ENCODE measurements at regions of chrX and their contacts with region 1.

Region 1: DNA sequence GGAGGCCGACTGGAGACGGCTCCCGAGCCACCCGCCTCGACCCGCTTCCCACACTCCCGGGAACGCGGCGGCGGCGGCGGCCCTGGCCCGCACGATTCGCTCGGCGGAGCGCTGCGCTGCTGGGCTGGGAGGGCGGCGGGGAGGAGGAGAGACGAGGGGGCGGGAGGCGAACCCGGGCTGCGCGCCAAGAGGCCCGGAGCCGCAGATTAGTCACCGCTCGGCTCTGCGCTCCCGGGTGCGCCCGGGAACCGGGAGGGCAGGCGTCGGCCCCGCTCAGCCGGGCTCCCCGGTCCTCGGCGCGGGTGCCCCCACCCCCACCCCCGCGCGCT is 11.2 kb upstream of the BCOR start:
- DNase-seq: peak; percentile 81 to 88 (median 85)
- ATAC-seq: peak; percentile 49 to 73 (median 68)
- H3K4me3 ChIP-seq: peak overlapping the region; percentile 41 to 88 (median 60)
- H3K27ac ChIP-seq: peak overlapping the region; percentile 81 to 97 (median 94)
- H3K4me1 ChIP-seq: peaks cover 0 to 63% (median 21%) of the 10 kb centered on the region in 12 donors
- H3K27me3 ChIP-seq: peaks cover 0 to 84% (median 0%) of the 10 kb centered on the region in 9 donors
- CTCF ChIP-seq: no peak
- POLR2A ChIP-seq: peak in 1 of 2 donors; percentile 34

Region 2: GRCh38 chrX:38803586-38804431 is 1305.1 kb before region 1 on chrX:
- intact Hi-C with region 1: loop called in 1 of 10 experiments (anchors 5 kb)
- DNase-seq: peak; percentile 86 to 91 (median 90)
- ATAC-seq: peak; percentile 84 to 92 (median 86)
- H3K4me3 ChIP-seq: peak overlapping the region; percentile 44 to 90 (median 70)
- H3K27ac ChIP-seq: peak overlapping the region; percentile 86 to 98 (median 93)
- H3K4me1 ChIP-seq: peaks cover 0 to 37% (median 12%) of the 10 kb centered on the region in 12 donors
- H3K27me3 ChIP-seq: no peaks in the 10 kb centered on the region
- CTCF ChIP-seq: no peak
- POLR2A ChIP-seq: peak in 1 of 2 donors; percentile 90

Region 3: GRCh38 chrX:39907964-39908616 is 200.8 kb before region 1 on chrX:
- intact Hi-C with region 1: loop called in 1 of 10 experiments (anchors 10 kb)
- DNase-seq: peak; percentile 44 to 76 (median 72)
- ATAC-seq: peak; percentile 80 to 93 (median 88)
- H3K4me3 ChIP-seq: no peak overlapping the region
- H3K27ac ChIP-seq: peak overlapping the region in 9 of 12 donors; percentile 27 to 66 (median 38)
- H3K4me1 ChIP-seq: peaks cover 0 to 29% (median 5%) of the 10 kb centered on the region in 12 donors
- H3K27me3 ChIP-seq: peaks cover 0 to 23% (median 0%) of the 10 kb centered on the region in 9 donors
- CTCF ChIP-seq: no peak
- POLR2A ChIP-seq: no peak

Region 4: GRCh38 chrX:40146262-40147125 is 37.6 kb after region 1 on chrX:
- intact Hi-C with region 1: loop called in 7 of 10 experiments (anchors 5 kb)
- DNase-seq: peak in 3 of 5 donors; percentile 26 to 56 (median 51)
- ATAC-seq: peak in 3 of 4 donors; percentile 12 to 49 (median 33)
- H3K4me3 ChIP-seq: peak overlapping the region; percentile 34 to 71 (median 56)
- H3K27ac ChIP-seq: peak overlapping the region in 8 of 12 donors; percentile 24 to 72 (median 58)
- H3K4me1 ChIP-seq: peaks cover 0 to 68% (median 23%) of the 10 kb centered on the region in 12 donors
- H3K27me3 ChIP-seq: peaks cover 0 to 82% (median 0%) of the 10 kb centered on the region in 9 donors
- CTCF ChIP-seq: no peak
- POLR2A ChIP-seq: no peak

Region 5: GRCh38 chrX:40153335-40154249 is 44.7 kb after region 1 on chrX:
- intact Hi-C with region 1: loop called (anchors 1 to 5 kb)
- DNase-seq: peak in 4 of 5 donors; percentile 37 to 70 (median 62)
- ATAC-seq: peak in 3 of 4 donors; percentile 3 to 22 (median 21)
- H3K4me3 ChIP-seq: peak overlapping the region; percentile 21 to 63 (median 50)
- H3K27ac ChIP-seq: peak overlapping the region; percentile 65 to 89 (median 81)
- H3K4me1 ChIP-seq: peaks cover 0 to 78% (median 29%) of the 10 kb centered on the region in 12 donors
- H3K27me3 ChIP-seq: peaks cover 0 to 96% (median 0%) of the 10 kb centered on the region in 9 donors
- CTCF ChIP-seq: peak in 6 of 12 donors; percentile 9 to 37 (median 27)
- POLR2A ChIP-seq: no peak

Region 6: GRCh38 chrX:40169193-40170101 is 60.5 kb after region 1 on chrX:
- intact Hi-C with region 1: loop called in 3 of 10 experiments (anchors 2 to 5 kb)
- DNase-seq: peak in 4 of 5 donors; percentile 34 to 75 (median 46)
- ATAC-seq: no peak
- H3K4me3 ChIP-seq: peak overlapping the region in 2 of 12 donors; percentile 19 to 43
- H3K27ac ChIP-seq: peak overlapping the region in 2 of 12 donors; percentile 74 to 76
- H3K4me1 ChIP-seq: peaks cover 0 to 56% (median 19%) of the 10 kb centered on the region in 12 donors
- H3K27me3 ChIP-seq: peaks cover 0 to 81% (median 0%) of the 10 kb centered on the region in 9 donors
- CTCF ChIP-seq: peak in 8 of 12 donors; percentile 15 to 35 (median 23)
- POLR2A ChIP-seq: no peak

Region 7: DNA sequence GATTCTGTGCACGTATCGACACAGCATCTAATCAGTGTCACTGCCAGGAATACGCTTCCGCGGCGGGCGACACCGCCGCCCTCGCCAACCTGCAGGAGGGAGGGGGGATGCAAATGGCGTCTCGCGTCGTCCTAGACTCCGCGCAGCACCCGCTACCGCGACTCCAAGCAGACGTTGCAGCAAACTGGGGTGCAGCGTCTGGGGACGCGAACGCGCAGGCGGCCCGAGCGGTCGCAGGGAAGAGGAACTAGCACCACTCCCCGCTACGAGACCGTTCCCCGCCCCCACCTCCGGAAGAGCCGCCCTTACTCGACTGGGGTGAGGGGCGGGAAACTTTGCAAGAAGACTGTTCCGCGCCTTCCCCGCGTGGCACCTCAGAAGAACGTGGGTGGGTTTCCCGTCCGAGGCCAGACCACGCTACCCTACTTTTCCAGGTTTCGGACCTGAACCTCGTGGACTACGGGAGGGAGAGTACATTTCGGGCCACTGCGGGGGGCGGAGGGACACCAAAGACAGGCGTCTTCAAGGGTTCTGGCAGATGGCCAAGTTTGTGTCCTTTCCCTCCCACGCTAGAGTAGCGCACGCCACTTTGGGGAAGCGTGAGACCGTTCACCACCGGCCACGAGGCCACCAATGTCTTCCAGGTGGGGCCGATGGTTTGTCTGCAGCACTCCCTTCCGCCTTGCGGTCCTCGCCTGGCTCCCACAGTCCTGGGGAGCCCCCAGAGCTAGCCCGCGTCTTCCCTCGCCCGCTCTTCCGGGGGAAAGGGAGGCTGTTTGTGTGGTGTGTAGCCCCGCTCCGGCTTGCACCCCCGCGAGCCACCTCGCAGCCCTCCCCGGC is 66.8 kb after region 1 on chrX:
- intact Hi-C with region 1: loop called in 3 of 10 experiments (anchors 2 to 5 kb)
- DNase-seq: peak; percentile 78 to 88 (median 82)
- ATAC-seq: peak; percentile 40 to 66 (median 62)
- H3K4me3 ChIP-seq: peak overlapping the region; percentile 35 to 79 (median 60)
- H3K27ac ChIP-seq: peak overlapping the region; percentile 84 to 99 (median 94)
- H3K4me1 ChIP-seq: peaks cover 0 to 41% (median 20%) of the 10 kb centered on the region in 12 donors
- H3K27me3 ChIP-seq: peaks cover 0 to 78% (median 0%) of the 10 kb centered on the region in 9 donors
- CTCF ChIP-seq: no peak
- POLR2A ChIP-seq: peak in 1 of 2 donors; percentile 31

Region 8: GRCh38 chrX:40314070-40314469 is 205.1 kb after region 1 on chrX:
- intact Hi-C with region 1: no loop called
- DNase-seq: no peak
- ATAC-seq: no peak
- H3K4me3 ChIP-seq: no peak overlapping the region
- H3K27ac ChIP-seq: no peak overlapping the region
- H3K4me1 ChIP-seq: no peaks in the 10 kb centered on the region
- H3K27me3 ChIP-seq: peaks cover 0 to 10% (median 0%) of the 10 kb centered on the region in 9 donors
- CTCF ChIP-seq: no peak
- POLR2A ChIP-seq: no peak